Naive thymus-derived CD4-positive, alpha-beta T cell (primary cell): ENCODE measurements at regions of chr2 and their contacts with region 1.

Region 1: GRCh38 chr2:27281855-27282559 is at the start of gene TRIM54:
- DNase-seq: no peak
- ATAC-seq: no peak
- H3K4me3 ChIP-seq: no peak within 1 kb of the TSS
- H3K4me3 Mint-ChIP-seq: peak within 1 kb of the TSS in 1 of 10 donors; percentile 35
- H3K27ac ChIP-seq: no peak within 1 kb of the TSS
- H3K27ac Mint-ChIP-seq: no peak within 1 kb of the TSS
- H3K4me1 ChIP-seq: no peaks in the 10 kb centered on the region
- H3K4me1 Mint-ChIP-seq: peaks cover 0 to 5% (median 4%) of the 10 kb centered on the region in 7 donors
- H3K27me3 ChIP-seq: no peaks in the 10 kb centered on the region
- H3K27me3 Mint-ChIP-seq: peaks cover 12 to 44% (median 26%) of the 10 kb centered on the region in 5 donors
- total RNA-seq, gene TRIM54: not detected

Region 2: DNA sequence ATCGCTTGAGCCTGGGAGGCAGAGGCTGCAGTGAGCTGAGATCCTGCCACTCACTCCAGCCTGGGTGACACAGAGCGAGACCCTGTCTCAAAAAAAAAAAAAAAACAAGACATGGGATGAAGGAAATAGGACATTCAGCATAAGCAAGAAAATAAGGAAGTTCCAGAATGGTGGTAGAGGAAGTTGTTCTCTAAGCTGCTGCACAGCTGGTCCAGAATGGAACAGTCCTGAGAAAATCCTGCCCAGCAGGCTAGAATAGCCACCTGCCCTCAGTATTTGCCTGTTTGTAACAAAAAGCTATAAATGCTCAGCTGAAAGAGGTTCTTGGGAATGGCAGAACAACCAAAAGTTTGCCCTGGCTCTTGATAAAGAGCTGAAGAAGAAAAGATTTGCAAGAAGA is 322.7 kb before region 1 on chr2:
- CTCF ChIA-PET with region 1: interaction called, 31 read pairs
- POLR2A ChIA-PET with region 1: no interaction called
- intact Hi-C with region 1: loop called (anchors 1 kb)
- DNase-seq: no peak
- ATAC-seq: no peak
- H3K4me3 ChIP-seq: no peak overlapping the region
- H3K4me3 Mint-ChIP-seq: no peak overlapping the region
- H3K27ac ChIP-seq: no peak overlapping the region
- H3K27ac Mint-ChIP-seq: peak overlapping the region in 1 of 9 donors; percentile 14
- H3K4me1 ChIP-seq: no peaks in the 10 kb centered on the region
- H3K4me1 Mint-ChIP-seq: peaks cover 0 to 8% (median 0%) of the 10 kb centered on the region in 7 donors
- H3K27me3 ChIP-seq: no peaks in the 10 kb centered on the region
- H3K27me3 Mint-ChIP-seq: peaks cover 9 to 52% (median 35%) of the 10 kb centered on the region in 5 donors

Region 3: DNA sequence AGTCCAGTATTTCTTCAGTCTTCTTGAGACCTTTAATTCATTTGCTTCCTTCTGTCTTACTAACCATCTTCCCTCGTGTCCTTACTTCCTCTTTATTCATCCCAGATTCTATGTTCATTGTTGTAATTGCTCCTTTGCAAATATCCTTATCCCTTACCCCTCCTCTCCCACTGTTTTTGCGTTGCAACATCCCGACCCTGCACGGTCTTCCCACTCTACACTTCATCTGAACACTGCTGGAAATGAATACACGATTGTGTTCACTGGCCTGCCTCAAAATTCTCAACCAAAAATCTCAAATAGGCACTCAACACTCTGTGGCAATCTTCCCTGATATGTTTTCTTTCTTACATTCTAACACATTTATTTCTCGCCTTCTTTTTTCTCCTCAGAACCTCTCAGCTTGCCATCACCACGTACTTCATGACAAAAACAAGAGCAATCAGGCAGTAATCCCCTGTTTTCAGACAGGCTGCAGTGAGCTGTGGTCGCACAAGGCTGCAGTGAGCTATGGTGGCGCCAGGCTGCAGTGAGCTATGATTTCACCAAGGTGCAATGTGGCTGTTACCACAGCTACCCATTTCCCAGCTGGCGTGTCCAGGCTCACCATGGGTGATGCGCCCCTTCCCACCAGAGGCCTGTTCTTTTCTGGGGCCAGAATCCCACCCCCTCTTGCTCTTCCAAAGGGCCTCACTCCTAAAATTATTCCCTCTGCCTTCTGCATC is 107.5 kb before region 1 on chr2:
- CTCF ChIA-PET with region 1: interaction called, 4 read pairs
- POLR2A ChIA-PET with region 1: no interaction called
- intact Hi-C with region 1: loop called (anchors 1 kb)
- DNase-seq: no peak
- ATAC-seq: no peak
- H3K4me3 ChIP-seq: no peak overlapping the region
- H3K4me3 Mint-ChIP-seq: no peak overlapping the region
- H3K27ac ChIP-seq: no peak overlapping the region
- H3K27ac Mint-ChIP-seq: no peak overlapping the region
- H3K4me1 ChIP-seq: no peaks in the 10 kb centered on the region
- H3K4me1 Mint-ChIP-seq: peaks cover 0 to 8% (median 4%) of the 10 kb centered on the region in 7 donors
- H3K27me3 ChIP-seq: no peaks in the 10 kb centered on the region
- H3K27me3 Mint-ChIP-seq: peaks cover 15 to 46% (median 21%) of the 10 kb centered on the region in 5 donors

Region 4: DNA sequence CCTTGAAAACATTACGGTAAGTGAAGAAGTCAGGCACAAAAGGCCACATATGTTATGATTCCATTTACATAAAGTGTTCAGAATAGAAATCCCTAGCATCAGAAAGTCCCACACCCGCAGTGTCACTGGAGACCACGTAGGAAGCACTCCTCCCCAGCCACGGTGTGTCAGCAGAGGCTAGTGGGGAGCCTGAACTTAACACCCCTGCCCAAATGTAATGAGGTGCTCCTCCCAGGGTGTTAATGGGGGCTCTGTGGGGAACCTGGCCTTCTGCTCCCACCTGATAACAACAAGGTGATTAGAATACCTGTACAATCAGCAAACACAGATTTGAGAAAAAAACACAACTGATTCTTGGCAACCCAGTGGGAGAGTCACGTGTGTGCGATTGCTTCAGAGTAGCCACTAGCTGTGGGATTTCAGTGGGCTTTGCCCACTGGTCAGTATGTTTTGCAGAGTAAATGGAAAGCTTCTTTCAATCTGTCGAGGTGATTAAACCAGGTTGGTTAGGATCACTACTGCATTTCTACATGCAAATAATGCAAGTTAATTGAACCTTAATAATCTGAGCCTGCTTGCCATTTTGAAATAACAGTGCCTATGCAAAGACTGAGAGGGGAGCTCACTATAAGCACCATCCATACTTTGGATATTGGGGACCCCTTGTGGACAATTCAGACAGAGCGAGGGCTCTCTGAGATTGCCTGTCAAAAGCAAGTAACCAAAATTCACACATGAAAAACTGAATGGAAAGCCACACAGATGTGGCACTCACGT is 90.8 kb before region 1 on chr2:
- CTCF ChIA-PET with region 1: no interaction called
- POLR2A ChIA-PET with region 1: no interaction called
- intact Hi-C with region 1: no loop called
- DNase-seq: peak in 7 of 9 donors; percentile 28 to 60 (median 51)
- ATAC-seq: peak; percentile 85
- H3K4me3 ChIP-seq: no peak overlapping the region
- H3K4me3 Mint-ChIP-seq: no peak overlapping the region
- H3K27ac ChIP-seq: no peak overlapping the region
- H3K27ac Mint-ChIP-seq: no peak overlapping the region
- H3K4me1 ChIP-seq: no peaks in the 10 kb centered on the region
- H3K4me1 Mint-ChIP-seq: peaks cover 0 to 2% (median 0%) of the 10 kb centered on the region in 7 donors
- H3K27me3 ChIP-seq: no peaks in the 10 kb centered on the region
- H3K27me3 Mint-ChIP-seq: peaks cover 0 to 15% (median 4%) of the 10 kb centered on the region in 5 donors

Region 5: GRCh38 chr2:27264753-27265535 is 17.1 kb before region 1 on chr2:
- CTCF ChIA-PET with region 1: interaction called, 6 read pairs
- POLR2A ChIA-PET with region 1: interaction called, 4 read pairs
- intact Hi-C with region 1: loop called (anchors 1 to 2 kb)
- DNase-seq: peak in 8 of 9 donors; percentile 39 to 63 (median 46)
- ATAC-seq: peak; percentile 85
- H3K4me3 ChIP-seq: peak overlapping the region; percentile 59
- H3K4me3 Mint-ChIP-seq: peak overlapping the region in 9 of 10 donors; percentile 59 to 97 (median 85)
- H3K27ac ChIP-seq: no peak overlapping the region
- H3K27ac Mint-ChIP-seq: peak overlapping the region in 2 of 9 donors; percentile 2 to 38
- H3K4me1 ChIP-seq: peaks cover 8 to 23% of the 10 kb centered on the region in 2 donors
- H3K4me1 Mint-ChIP-seq: peaks cover 23 to 33% (median 29%) of the 10 kb centered on the region in 7 donors
- H3K27me3 ChIP-seq: peaks cover 6 to 18% of the 10 kb centered on the region in 2 donors
- H3K27me3 Mint-ChIP-seq: peaks cover 34 to 47% (median 40%) of the 10 kb centered on the region in 5 donors